ENCODE measurements at regions of chr9 and their contacts with region 1.

Region 1: DNA sequence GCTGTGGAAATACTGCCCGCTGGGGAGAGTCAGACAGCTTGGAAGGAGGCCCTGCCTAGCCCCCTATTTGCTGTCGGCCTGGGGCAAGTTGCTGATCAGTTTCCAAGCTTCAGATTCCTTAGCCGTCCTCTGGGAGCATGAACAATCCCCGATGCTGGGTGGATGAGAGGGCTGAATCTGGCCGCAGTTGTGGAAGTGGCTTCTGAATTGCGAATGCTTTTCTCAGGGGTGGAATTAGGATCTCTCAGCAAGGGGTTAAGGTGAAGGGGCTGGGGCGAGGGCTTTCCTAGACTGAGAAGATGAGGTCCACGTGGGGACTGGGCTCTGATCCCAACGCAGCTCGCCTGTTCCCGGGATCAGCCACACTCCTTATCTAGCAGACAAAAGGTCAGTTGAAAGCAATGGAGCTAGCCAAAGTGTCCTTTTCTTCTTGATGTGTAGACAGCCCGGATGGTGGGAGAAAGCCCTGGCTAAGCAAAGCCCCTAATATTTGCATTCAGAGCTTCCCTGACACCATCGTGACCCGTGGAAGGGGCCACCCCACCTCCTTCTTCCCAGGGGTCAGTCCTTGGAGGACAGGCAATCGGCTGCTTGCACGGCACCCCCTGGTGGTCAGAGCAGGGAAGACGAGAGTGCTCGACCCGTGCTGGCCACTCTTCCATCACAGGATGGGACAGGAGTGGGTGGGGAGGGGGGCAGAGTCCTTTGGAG is 54.9 kb downstream of the COL15A1 start:
- DNase-seq: peak; percentile 72 to 93 (median 85)
- ATAC-seq: peak; percentile 90 to 92 (median 91)
- H3K4me3 ChIP-seq: no peak overlapping the region
- H3K27ac ChIP-seq: no peak overlapping the region
- H3K4me1 ChIP-seq: peaks cover 0 to 4% (median 0%) of the 10 kb centered on the region in 3 donors
- H3K27me3 ChIP-seq: no peaks in the 10 kb centered on the region
- CTCF ChIP-seq: peak; percentile 58 to 88 (median 82)

Region 2: GRCh38 chr9:98848450-98849149 is 150.0 kb before region 1 on chr9:
- intact Hi-C with region 1: loop called (anchors 5 to 10 kb)
- DNase-seq: peak; percentile 85 to 97 (median 91)
- ATAC-seq: peak; percentile 98 to 99 (median 99)
- H3K4me3 ChIP-seq: peak overlapping the region in 2 of 4 donors; percentile 21 to 31
- H3K27ac ChIP-seq: peak overlapping the region in 2 of 4 donors; percentile 16 to 51
- H3K4me1 ChIP-seq: peaks cover 0 to 8% (median 0%) of the 10 kb centered on the region in 3 donors
- H3K27me3 ChIP-seq: no peaks in the 10 kb centered on the region
- CTCF ChIP-seq: peak; percentile 79 to 88 (median 86)

Region 3: DNA sequence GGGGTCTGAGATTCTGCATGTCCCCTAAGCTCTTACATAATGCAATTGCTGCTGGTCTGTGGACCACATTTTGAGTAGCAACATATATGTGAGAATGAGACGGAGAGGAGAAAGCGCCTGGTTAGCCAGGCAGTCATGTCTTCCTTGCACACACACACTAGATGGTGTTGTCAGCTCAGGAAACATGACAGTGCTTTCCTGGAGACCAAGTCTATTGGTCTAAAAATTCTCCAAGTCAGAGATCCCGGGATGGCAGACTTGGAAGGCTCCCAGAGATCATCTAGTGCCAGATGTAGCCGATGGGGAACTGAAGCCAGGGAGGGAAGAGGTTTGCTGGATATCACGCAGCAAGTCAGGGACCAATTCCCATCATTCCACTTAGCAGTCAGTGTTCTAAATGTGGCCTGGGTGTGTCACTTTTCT is 137.7 kb before region 1 on chr9:
- intact Hi-C with region 1: loop called in 2 of 3 experiments (anchors 5 to 10 kb)
- DNase-seq: peak in 4 of 6 donors; percentile 46 to 69 (median 64)
- ATAC-seq: peak; percentile 86 to 93 (median 90)
- H3K4me3 ChIP-seq: no peak overlapping the region
- H3K27ac ChIP-seq: no peak overlapping the region
- H3K4me1 ChIP-seq: peaks cover 0 to under 1% (median 0%) of the 10 kb centered on the region in 3 donors
- H3K27me3 ChIP-seq: no peaks in the 10 kb centered on the region
- CTCF ChIP-seq: no peak

Region 4: GRCh38 chr9:98899408-98900056 is 99.1 kb before region 1 on chr9:
- intact Hi-C with region 1: no loop called
- DNase-seq: no peak
- ATAC-seq: peak in 1 of 4 donors; percentile 41
- H3K4me3 ChIP-seq: no peak overlapping the region
- H3K27ac ChIP-seq: no peak overlapping the region
- H3K4me1 ChIP-seq: no peaks in the 10 kb centered on the region
- H3K27me3 ChIP-seq: no peaks in the 10 kb centered on the region
- CTCF ChIP-seq: no peak

Region 5: DNA sequence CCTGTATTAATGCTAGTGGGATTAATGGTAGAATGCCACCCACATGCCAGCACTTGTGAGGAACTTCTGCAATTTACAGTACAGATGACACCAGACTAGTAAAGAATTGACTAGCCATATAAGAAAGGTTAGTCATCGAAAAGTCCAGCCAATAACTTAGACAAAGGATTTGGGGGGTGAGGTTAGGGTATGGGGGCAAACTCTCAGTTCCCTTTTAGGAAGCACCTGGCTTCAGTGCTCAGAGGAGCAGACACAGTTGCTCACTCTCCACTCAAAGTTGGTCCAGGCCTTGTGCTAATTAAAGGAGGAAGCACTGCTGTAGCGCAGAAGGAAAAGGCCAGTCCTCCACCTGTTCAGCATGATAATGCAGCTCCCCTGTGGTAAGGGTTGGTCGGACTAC is 131.5 kb after region 1 on chr9:
- intact Hi-C with region 1: loop called in 1 of 3 experiments (anchors 10 kb)
- DNase-seq: no peak
- ATAC-seq: no peak
- H3K4me3 ChIP-seq: no peak overlapping the region
- H3K27ac ChIP-seq: no peak overlapping the region
- H3K4me1 ChIP-seq: no peaks in the 10 kb centered on the region
- H3K27me3 ChIP-seq: no peaks in the 10 kb centered on the region
- CTCF ChIP-seq: no peak

Measured in pancreas (tissue), 10 donors.